Heart left ventricle (tissue), 16 donors: ENCODE measurements at regions of chr19 and their contacts with region 1.

Region 1: DNA sequence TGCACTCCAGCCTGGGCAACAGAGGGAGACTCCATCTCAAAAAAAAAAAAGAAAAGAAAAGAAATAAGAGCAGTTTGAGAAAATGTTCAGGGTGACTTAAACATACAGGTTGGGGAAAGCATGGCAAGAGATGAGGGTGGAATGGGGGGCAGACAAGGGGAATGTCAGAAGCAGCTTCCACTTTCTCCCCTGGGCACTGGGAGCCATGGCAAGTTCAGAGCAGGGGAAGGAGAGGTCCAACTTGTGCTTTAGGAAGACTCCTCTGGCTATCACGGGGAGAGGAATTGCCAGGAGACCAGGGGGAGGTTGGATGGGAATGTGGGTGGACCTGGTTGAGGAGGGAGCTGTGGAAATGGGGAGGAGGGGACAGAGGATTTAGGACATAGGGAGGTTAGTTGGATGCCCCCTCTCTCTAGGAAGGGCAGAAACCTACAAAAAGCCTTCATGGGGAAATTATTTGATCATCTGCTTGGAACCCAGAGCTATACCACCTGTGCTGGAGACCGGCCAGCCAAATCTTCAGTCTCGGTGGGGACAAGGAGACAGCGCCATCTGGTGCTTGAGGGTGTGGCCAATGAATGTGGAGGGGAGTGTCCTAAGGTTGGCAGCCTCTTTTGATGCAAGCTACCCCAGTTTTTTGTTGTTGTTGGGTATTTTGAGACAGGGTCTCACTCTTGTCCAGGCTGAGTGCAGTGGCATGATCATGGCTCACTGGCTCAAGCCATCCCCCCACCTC is 7.3 kb upstream of the STRN4 start:
- DNase-seq: no peak
- ATAC-seq: peak in 2 of 4 donors; percentile 13 to 19
- H3K4me3 ChIP-seq: no peak overlapping the region
- H3K27ac ChIP-seq: no peak overlapping the region
- H3K4me1 ChIP-seq: peaks cover 0 to 25% (median 4%) of the 10 kb centered on the region in 12 donors
- H3K27me3 ChIP-seq: no peaks in the 10 kb centered on the region
- CTCF ChIP-seq: peak; percentile 20 to 61 (median 45)
- POLR2A ChIP-seq: no peak

Region 2: DNA sequence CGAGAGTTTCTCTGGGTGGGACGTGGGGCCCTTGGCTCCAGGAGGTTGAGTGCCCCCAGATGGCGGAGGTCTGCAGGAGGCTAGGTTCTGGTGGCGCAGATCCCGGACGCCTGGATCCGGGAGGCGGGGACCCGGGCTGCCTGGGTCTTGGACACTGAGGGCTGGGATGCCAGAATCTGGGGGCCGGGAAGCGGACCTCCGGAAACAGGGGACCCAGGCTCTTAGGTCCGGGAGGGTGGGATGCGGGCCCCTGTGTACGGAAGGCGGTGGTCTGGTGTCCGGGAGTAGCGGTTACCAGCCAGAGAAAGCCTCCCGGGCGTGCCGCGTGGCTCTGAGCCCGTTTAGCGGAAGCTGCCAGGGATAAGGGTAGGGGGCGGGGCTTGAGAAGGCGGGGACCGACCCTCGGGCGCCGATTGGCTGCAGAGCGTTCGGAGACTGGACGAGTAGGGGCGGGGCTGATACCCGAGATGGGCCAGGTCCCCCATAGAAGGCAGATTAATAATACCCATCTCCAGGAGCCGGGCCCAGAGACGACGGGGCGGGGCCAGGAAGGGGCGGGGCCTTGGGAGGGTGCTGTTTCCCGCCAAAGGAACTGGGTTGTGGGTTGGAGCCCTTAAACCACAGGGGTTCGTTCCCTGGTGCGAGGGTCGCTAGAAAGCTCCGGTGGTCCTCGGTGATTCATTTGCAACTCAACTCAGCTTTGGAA is 34.8 kb after region 1 on chr19 and contains the start of gene SLC1A5:
- intact Hi-C with region 1: loop called in 1 of 10 experiments (anchors 2 kb)
- DNase-seq: peak; percentile 95 to 98 (median 96)
- ATAC-seq: peak; percentile 86 to 95 (median 94)
- H3K4me3 ChIP-seq: peak within 1 kb of the TSS; percentile 24 to 80 (median 64)
- H3K27ac ChIP-seq: peak within 1 kb of the TSS; percentile 49 to 95 (median 82)
- H3K4me1 ChIP-seq: peaks cover 0 to 49% (median 26%) of the 10 kb centered on the region in 12 donors
- H3K27me3 ChIP-seq: peaks cover 0 to 11% (median 0%) of the 10 kb centered on the region in 9 donors
- CTCF ChIP-seq: peak in 1 of 12 donors; percentile 5
- POLR2A ChIP-seq: peak; percentile 3 to 93
- total RNA-seq, gene SLC1A5: 3.7 to 22.4 (median 8.9) TPM

Region 3: GRCh38 chr19:46821498-46822409 is 68.2 kb after region 1 on chr19:
- intact Hi-C with region 1: no loop called
- DNase-seq: peak in 2 of 5 donors; percentile 49 to 73
- ATAC-seq: peak in 3 of 4 donors; percentile 33 to 62 (median 45)
- H3K4me3 ChIP-seq: peak overlapping the region in 1 of 12 donors; percentile 1
- H3K27ac ChIP-seq: peak overlapping the region in 1 of 12 donors; percentile 57
- H3K4me1 ChIP-seq: peaks cover 0 to 37% (median 0%) of the 10 kb centered on the region in 12 donors
- H3K27me3 ChIP-seq: no peaks in the 10 kb centered on the region
- CTCF ChIP-seq: no peak
- POLR2A ChIP-seq: no peak

Region 4: DNA sequence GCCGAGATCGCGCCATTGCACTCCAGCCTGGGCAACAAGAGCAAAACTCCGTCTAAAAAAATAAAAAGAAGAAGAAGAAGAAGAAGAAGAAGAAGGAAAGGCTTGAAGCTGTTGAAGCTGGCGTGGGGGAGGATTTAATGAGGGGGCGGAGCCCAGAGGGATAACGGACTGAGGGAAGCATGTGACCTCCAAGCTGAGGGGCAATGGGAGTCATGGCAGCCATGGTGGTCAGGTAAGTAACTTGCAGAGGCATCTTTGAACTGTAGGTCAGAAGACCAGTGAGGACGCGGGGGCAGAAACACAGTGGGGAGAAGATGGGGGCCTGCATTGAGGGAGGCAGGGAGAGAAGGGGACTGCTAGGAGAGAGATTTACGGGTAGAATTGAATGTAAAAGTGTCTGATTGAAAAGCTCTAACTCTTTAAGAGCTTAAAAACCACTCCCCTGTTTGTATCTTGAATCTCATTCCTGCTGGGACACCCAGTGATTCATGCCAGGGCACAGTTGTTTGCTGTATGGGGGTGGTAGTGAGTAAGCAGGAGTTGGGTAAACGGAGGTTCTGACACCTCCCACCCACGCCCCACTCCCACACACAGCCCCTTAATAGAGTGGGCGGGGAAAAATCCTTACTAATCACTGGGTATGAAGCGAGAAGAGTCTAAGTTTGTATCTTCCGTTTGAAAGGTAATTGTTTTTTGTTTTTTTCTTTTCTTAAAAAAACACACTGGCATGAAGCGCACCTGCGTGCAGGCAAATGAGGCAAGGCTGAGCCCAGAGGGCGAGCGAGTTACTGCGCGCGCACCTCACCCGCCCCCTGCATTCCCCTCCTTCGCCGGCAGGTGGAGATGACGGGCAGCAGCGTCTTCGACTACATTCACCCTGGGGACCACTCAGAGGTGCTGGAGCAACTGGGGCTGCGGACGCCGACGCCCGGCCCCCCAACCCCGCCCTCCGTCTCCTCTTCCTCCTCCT is 281.8 kb after region 1 on chr19:
- intact Hi-C with region 1: loop called in 2 of 10 experiments (anchors 10 kb)
- DNase-seq: peak; percentile 78 to 92 (median 82)
- ATAC-seq: peak; percentile 88 to 94 (median 92)
- H3K4me3 ChIP-seq: peak overlapping the region in 11 of 12 donors; percentile 8 to 60 (median 49)
- H3K27ac ChIP-seq: peak overlapping the region in 1 of 12 donors; percentile 49
- H3K4me1 ChIP-seq: peaks cover 0 to 17% (median 9%) of the 10 kb centered on the region in 12 donors
- H3K27me3 ChIP-seq: peaks cover 0 to 20% (median 0%) of the 10 kb centered on the region in 9 donors
- CTCF ChIP-seq: peak; percentile 94 to 99 (median 97)
- POLR2A ChIP-seq: no peak

Region 5: GRCh38 chr19:47063874-47064273 is 310.3 kb after region 1 on chr19:
- intact Hi-C with region 1: no loop called
- DNase-seq: no peak
- ATAC-seq: no peak
- H3K4me3 ChIP-seq: no peak overlapping the region
- H3K27ac ChIP-seq: no peak overlapping the region
- H3K4me1 ChIP-seq: no peaks in the 10 kb centered on the region
- H3K27me3 ChIP-seq: no peaks in the 10 kb centered on the region
- CTCF ChIP-seq: no peak
- POLR2A ChIP-seq: no peak